GM12878 (cell line): ENCODE measurements at regions of chr6 and their contacts with region 1.

Region 1: DNA sequence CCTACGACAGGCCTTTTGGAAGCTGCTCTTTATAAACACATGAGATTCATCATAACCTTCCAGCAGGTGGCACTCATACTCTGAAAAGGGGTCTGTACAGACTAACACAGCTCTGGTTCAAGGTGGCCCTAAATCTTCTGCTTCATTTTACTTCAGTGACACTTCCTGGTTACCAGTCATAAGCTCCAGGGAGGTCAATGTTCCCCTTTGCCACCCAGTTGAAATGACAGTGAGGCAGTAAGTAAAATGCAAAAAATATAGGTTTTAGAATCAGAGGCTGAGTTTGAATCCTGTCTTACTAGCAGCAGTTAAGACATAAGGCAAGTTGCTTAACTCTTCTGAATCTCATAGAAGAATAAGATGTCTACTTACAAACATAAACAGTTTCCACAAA is 132.8 kb downstream of the CDK19 start:
- DNase-seq: peak; percentile 85
- ATAC-seq: peak; percentile 100
- H3K4me3 ChIP-seq: no peak overlapping the region
- H3K27ac ChIP-seq: no peak overlapping the region; the same call in 1 of the 2 replicates
- H3K4me1 ChIP-seq: 0 out of 2 replicates have a peak, but pooled peaks cover 6% of the 10 kb centered on the region
- H3K27me3 ChIP-seq: no peaks in the 10 kb centered on the region
- CTCF ChIP-seq: peak; percentile 59 to 83 (median 70); a peak in 5 of 6 replicates
- EP300 ChIP-seq: no peak
- POLR2A ChIP-seq: no peak
- RAD21 ChIP-seq: peak; percentile 99

Region 2: DNA sequence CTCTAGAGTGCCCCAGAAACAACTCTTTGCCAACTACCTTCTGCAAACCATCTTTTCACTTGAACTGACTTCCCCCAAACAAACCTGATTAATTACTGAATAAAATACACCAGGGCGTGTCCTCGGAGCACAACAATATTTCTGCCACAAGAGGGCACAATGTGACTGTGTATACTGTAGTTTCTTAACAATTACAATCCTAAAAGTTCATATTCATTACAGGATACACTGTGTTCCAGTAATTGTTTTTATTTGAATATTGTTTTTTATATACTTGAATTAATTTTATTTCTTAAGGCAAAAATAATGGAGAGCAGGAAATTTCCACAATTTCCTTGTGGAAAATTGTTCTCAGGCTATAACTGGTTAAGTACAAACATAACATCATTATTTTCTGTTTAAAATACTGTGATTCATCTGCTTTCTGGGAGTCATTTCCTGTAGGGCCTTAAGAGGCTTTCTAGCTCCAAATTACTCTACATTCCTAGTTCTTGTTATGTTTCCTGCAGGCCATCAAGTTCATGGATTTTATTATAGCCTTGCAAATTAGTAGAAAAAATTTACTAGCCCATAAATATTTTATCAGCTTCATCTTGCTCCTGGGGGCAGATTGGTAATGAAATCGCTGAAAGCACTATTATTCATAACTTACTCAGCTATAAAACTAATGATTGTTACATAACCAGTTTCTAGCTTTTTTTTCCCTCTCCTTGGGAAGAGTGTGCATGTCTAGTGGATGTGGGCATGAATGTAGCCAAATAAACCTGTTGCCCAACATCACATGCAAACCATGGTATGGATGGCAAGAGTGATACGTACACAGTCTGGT is 154.1 kb before region 1 on chr6:
- CTCF ChIA-PET with region 1: interaction called, 21 read pairs
- POLR2A ChIA-PET with region 1: no interaction called
- RAD21 ChIA-PET with region 1: interaction called, 27 read pairs
- SMC1A ChIA-PET with region 1: interaction called, 24 read pairs
- in situ Hi-C with region 1: no loop called
- intact Hi-C with region 1: loop called (anchors 1 kb)
- DNase-seq: peak; percentile 28
- ATAC-seq: peak; percentile 89
- H3K4me3 ChIP-seq: no peak overlapping the region
- H3K27ac ChIP-seq: no peak overlapping the region
- H3K4me1 ChIP-seq: no peaks in the 10 kb centered on the region
- H3K27me3 ChIP-seq: peaks cover 0 to 1% of the 10 kb centered on the region in 2 experiments; a peak in 2 of 4 replicates
- CTCF ChIP-seq: peak; percentile 47 to 88 (median 73); a peak in 5 of 6 replicates
- EP300 ChIP-seq: no peak
- POLR2A ChIP-seq: no peak
- RAD21 ChIP-seq: peak; percentile 93

Region 3: DNA sequence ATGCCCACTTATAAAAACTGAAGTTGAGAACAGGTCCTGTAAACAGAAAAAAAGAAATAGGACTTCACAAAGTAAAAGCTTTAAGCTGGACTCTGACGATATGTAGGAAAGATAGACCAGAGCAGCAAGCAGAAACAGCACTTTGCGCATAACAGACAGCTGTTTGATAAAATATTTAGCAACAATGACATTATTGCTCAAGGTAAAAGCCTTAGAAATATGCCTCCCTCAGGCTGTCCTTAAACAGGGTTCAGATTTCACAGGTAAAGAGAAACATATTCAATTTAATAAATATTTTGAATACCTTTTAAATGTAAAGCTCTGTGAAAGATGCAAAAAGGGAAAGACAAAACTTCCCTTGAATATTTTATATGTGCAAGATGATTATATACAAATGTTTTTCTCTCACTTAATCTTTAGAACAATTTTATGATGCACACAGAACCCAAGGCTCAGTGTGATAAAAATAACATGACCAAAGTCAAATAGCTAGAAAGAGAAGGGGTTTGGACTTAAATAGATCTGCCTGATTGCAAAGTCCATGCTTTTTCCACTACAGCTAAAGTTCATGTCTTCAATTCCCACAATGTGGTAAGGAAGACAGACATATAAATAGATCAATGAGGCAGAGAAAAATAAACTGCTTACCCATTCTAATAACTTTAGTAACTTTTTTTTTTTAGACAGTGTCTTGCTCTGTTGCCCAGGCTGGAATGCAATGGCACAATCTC is 11.2 kb before region 1 on chr6:
- CTCF ChIA-PET with region 1: interaction called, 5 read pairs
- POLR2A ChIA-PET with region 1: interaction called, 3 read pairs
- RAD21 ChIA-PET with region 1: interaction called, 8 read pairs
- SMC1A ChIA-PET with region 1: interaction called, 10 read pairs
- in situ Hi-C with region 1: no loop called
- intact Hi-C with region 1: no loop called
- DNase-seq: no peak
- ATAC-seq: no peak
- H3K4me3 ChIP-seq: no peak overlapping the region
- H3K27ac ChIP-seq: no peak overlapping the region
- H3K4me1 ChIP-seq: no peaks in the 10 kb centered on the region
- H3K27me3 ChIP-seq: no peaks in the 10 kb centered on the region
- CTCF ChIP-seq: no peak
- EP300 ChIP-seq: no peak
- POLR2A ChIP-seq: no peak
- RAD21 ChIP-seq: no peak

Region 4: DNA sequence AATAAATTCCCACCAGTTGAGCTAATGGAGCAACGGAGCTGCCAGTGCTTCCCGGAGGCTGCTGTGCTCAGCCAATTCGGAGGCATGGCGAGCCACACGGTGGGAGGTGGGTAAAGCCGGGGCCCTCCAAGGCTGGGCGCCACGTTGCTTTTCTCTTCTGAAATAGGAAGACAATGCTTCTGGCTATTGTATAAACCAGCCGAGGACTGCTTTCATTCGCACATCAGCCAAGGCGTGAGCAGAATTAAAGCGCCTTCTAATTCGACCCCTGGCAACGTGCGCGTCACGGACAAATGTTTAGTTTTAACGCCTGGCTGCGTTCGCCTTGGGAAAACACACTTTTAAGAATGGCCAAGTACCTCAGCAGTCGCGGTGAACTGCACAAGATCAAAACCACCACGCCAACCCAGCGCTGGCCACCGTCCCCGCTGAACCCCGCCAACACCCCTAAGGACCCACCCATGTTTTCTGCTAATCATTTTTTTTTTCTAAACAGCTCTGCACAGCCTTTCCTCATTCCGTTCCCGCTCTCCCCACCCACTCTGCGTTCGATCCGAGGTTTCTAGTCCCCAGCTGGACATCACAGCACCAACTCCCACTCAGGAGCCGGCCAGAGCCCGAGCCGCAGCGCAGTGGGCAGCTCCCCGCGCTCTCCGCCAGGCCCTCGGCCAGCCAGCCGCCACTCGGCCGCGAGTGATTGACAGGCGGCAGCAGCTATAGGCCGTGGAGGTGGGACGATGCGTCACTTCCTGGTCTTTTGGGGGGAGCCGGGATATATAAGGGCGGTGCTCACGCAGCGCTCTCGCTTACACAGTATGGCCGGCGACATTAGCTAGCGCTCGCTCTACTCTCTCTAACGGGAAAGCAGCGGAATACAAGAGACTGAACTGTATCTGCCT is 191.8 kb after region 1 on chr6 and contains the start of gene AMD1:
- CTCF ChIA-PET with region 1: interaction called, 87 read pairs
- POLR2A ChIA-PET with region 1: interaction called, 11 read pairs
- RAD21 ChIA-PET with region 1: interaction called, 98 read pairs
- SMC1A ChIA-PET with region 1: interaction called, 74 read pairs
- in situ Hi-C with region 1: loop called (anchors 5 kb)
- intact Hi-C with region 1: loop called (anchors 1 kb)
- DNase-seq: peak; percentile 85
- ATAC-seq: peak; percentile 73
- H3K4me3 ChIP-seq: peak within 1 kb of the TSS; percentile 94
- H3K27ac ChIP-seq: peak within 1 kb of the TSS; percentile 93
- H3K4me1 ChIP-seq: peaks cover 16% of the 10 kb centered on the region
- H3K27me3 ChIP-seq: no peaks in the 10 kb centered on the region
- CTCF ChIP-seq: no peak
- EP300 ChIP-seq: no peak
- POLR2A ChIP-seq: peak; percentile 98
- RAD21 ChIP-seq: no peak
- polyA plus RNA-seq, gene AMD1: 59.6 to 75.5 TPM

Region 5: GRCh38 chr6:110949679-110950285 is 267.3 kb after region 1 on chr6:
- CTCF ChIA-PET with region 1: interaction called, 91 read pairs
- POLR2A ChIA-PET with region 1: interaction called, 4 read pairs
- RAD21 ChIA-PET with region 1: interaction called, 71 read pairs
- SMC1A ChIA-PET with region 1: interaction called, 117 read pairs
- in situ Hi-C with region 1: loop called (anchors 5 kb)
- intact Hi-C with region 1: loop called (anchors 1 kb)
- DNase-seq: no peak
- ATAC-seq: no peak
- H3K4me3 ChIP-seq: no peak overlapping the region
- H3K27ac ChIP-seq: no peak overlapping the region
- H3K4me1 ChIP-seq: peaks cover 6% of the 10 kb centered on the region
- H3K27me3 ChIP-seq: no peaks in the 10 kb centered on the region
- CTCF ChIP-seq: peak; percentile 27 to 58 (median 51); a peak in 4 of 6 replicates
- EP300 ChIP-seq: no peak
- POLR2A ChIP-seq: no peak
- RAD21 ChIP-seq: peak; percentile 64

Region 6: GRCh38 chr6:110990840-110991576 is 308.6 kb after region 1 on chr6:
- CTCF ChIA-PET with region 1: interaction called, 14 read pairs
- POLR2A ChIA-PET with region 1: no interaction called
- RAD21 ChIA-PET with region 1: interaction called, 4 read pairs
- SMC1A ChIA-PET with region 1: no interaction called
- in situ Hi-C with region 1: no loop called
- intact Hi-C with region 1: loop called (anchors 5 kb)
- DNase-seq: no peak
- ATAC-seq: no peak
- H3K4me3 ChIP-seq: no peak overlapping the region
- H3K27ac ChIP-seq: no peak overlapping the region
- H3K4me1 ChIP-seq: no peaks in the 10 kb centered on the region
- H3K27me3 ChIP-seq: no peaks in the 10 kb centered on the region
- CTCF ChIP-seq: no peak
- EP300 ChIP-seq: no peak
- POLR2A ChIP-seq: no peak
- RAD21 ChIP-seq: no peak